ENCODE measurements at regions of chr2 and their contacts with region 1.

Region 1: DNA sequence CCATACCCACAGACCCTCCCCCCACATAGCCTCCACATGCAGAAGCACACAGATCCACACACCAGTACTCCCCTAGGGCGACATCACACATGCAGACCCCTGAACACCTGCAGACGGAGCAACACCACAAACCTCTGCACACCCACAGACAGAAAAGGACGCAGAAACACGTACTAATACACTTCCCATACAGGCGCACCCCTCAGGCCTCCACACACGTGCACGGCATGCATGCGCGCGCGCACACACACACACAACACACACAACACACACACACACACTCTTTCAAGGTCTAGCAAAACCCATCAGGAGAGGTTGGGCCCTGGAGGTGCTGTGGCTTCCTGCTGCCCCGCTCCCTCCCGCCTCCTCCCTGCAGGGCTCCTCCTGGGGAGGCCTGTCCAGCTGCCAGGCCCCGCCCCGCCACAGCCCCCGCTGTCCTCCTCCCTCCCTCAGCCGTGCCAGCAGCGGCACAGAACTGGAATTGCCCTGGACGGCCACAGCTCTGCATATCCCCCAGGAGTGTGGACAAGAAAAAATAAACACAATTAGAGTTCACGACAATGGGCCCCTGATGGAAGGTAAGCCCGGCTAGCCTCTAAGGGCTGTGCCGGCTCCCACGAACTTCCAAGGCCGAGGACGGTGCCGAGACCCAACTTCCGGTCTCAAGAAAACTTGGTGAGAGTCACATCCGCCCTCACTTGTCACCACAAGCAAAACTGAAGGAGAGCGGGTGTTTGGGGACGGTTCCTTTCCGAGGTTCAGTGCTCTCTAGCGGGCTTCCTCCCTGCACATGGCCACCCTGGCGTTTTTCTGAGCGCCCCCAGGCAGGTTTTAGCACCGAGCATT is 6.8 kb downstream of the ZFP36L2 start:
- DNase-seq: peak; percentile 75
- ATAC-seq: peak; percentile 86
- H3K4me3 ChIP-seq: peak overlapping the region; percentile 67 to 81
- H3K27ac ChIP-seq: peak overlapping the region; percentile 90
- H3K4me1 ChIP-seq: peaks cover 45 to 58% of the 10 kb centered on the region in 2 experiments
- H3K27me3 ChIP-seq: no peaks in the 10 kb centered on the region
- CTCF ChIP-seq: no peak
- POLR2A ChIP-seq: peak; percentile 46
- RAD21 ChIP-seq: no peak

Region 2: GRCh38 chr2:42979416-42979869 is 240.2 kb before region 1 on chr2:
- CTCF ChIA-PET with region 1: no interaction called
- POLR2A ChIA-PET with region 1: no interaction called
- RAD21 ChIA-PET with region 1: no interaction called
- intact Hi-C with region 1: no loop called
- DNase-seq: no peak
- ATAC-seq: no peak
- H3K4me3 ChIP-seq: no peak overlapping the region
- H3K27ac ChIP-seq: no peak overlapping the region
- H3K4me1 ChIP-seq: peaks cover 0 to 4% of the 10 kb centered on the region in 2 experiments; a peak in 1 of 4 replicates
- H3K27me3 ChIP-seq: no peaks in the 10 kb centered on the region
- CTCF ChIP-seq: no peak
- POLR2A ChIP-seq: no peak
- RAD21 ChIP-seq: no peak

Region 3: DNA sequence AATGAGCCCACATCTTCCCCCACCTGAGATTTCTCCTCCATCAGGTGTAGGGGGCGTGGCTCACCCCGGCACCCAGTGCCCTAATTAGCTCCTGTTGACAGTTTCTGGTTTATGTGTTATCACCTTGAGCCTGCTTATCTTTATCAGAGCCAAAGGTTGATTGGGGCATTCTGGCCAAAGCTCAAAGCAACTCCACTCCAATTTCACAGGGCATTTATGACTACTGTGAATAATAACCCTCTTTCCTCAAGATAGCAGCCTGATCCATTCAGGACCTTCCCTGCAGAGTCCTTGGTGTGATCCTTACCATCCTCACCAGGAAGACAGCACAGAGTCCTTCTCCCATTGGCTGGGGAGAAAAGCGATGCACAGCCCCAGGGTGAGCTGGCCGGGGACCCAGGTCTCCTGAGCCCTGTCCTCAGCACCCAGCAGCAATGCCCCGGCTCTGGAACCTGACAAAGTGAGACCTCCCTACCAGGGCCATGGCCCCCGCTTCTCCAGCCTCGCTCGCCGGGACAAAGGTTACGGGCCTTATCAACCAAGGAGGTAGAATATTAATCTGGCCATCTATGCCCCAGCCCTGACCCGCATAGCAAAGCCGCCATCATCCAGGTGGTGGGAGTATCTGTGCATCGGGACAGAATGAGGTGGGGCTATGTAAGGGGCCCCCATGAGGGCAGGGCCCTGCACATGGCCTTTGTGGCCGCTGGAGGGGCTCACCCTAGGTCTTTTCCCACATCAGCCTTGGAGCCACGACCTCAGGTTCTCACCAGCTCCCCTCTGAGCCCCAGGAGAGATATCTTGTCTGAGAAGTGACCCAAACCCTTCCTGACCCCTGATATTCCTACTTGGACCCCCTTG is 57.7 kb before region 1 on chr2:
- CTCF ChIA-PET with region 1: no interaction called
- POLR2A ChIA-PET with region 1: interaction called, 4 read pairs
- RAD21 ChIA-PET with region 1: interaction called in 1 of 2 experiments, 10 read pairs
- intact Hi-C with region 1: no loop called
- DNase-seq: no peak
- ATAC-seq: no peak
- H3K4me3 ChIP-seq: no peak overlapping the region
- H3K27ac ChIP-seq: no peak overlapping the region
- H3K4me1 ChIP-seq: peaks cover 31 to 48% of the 10 kb centered on the region in 2 experiments
- H3K27me3 ChIP-seq: no peaks in the 10 kb centered on the region
- CTCF ChIP-seq: no peak
- POLR2A ChIP-seq: no peak
- RAD21 ChIP-seq: no peak

Region 4: DNA sequence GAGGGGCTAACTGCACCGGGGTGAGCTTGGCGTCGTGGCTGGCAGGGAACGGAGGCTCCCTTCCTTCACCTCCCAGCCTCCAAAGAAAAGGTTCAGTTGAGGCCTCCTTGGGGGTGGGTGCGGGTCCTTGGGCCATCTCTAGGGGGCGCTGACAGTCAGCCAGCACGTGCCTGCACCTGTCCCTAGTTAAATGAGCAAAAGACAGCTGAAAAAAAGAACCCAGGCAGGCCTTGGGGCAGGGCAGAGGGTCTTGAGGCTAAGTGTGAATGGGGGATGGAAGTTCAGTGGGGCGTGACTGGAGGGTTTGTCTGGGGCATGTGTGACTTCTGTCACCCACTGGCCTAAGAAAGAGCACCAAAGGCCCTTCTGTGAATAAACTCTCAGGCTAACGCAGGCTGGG is 49.6 kb before region 1 on chr2:
- CTCF ChIA-PET with region 1: interaction called, 15 read pairs
- POLR2A ChIA-PET with region 1: interaction called, 5 read pairs
- RAD21 ChIA-PET with region 1: interaction called in 1 of 2 experiments, 4 read pairs
- intact Hi-C with region 1: no loop called
- DNase-seq: no peak
- ATAC-seq: peak; percentile 79
- H3K4me3 ChIP-seq: no peak overlapping the region
- H3K27ac ChIP-seq: peak overlapping the region; percentile 41; the same call in 1 of the 2 replicates
- H3K4me1 ChIP-seq: peaks cover 13 to 26% of the 10 kb centered on the region in 2 experiments
- H3K27me3 ChIP-seq: no peaks in the 10 kb centered on the region
- CTCF ChIP-seq: peak; percentile 79 to 96 (median 93)
- POLR2A ChIP-seq: no peak
- RAD21 ChIP-seq: peak; percentile 85